ENCODE measurements at regions of chr14 and their contacts with region 1.

Region 1: GRCh38 chr14:90399541-90400444 is 3.0 kb downstream of the CALM1 start:
- DNase-seq: peak; percentile 73 to 95 (median 85)
- ATAC-seq: peak; percentile 47
- H3K4me3 ChIP-seq: peak overlapping the region; percentile 59 to 75
- H3K4me3 Mint-ChIP-seq: peak overlapping the region; percentile 99
- H3K27ac ChIP-seq: peak overlapping the region; percentile 89
- H3K27ac Mint-ChIP-seq: peak overlapping the region; percentile 99
- H3K4me1 ChIP-seq: peaks cover 56% of the 10 kb centered on the region
- H3K4me1 Mint-ChIP-seq: peaks cover 60% of the 10 kb centered on the region
- H3K27me3 ChIP-seq: no peaks in the 10 kb centered on the region
- H3K27me3 Mint-ChIP-seq: no peaks in the 10 kb centered on the region
- CTCF ChIP-seq: peak; percentile 100

Region 2: GRCh38 chr14:90256354-90257131 is 143.2 kb before region 1 on chr14 and contains the start of gene PSMC1:
- CTCF ChIA-PET with region 1: interaction called, 4 read pairs
- POLR2A ChIA-PET with region 1: no interaction called
- intact Hi-C with region 1: loop called (anchors 2 to 5 kb)
- DNase-seq: peak; percentile 78 to 92 (median 85)
- ATAC-seq: peak; percentile 94
- H3K4me3 ChIP-seq: peak within 1 kb of the TSS; percentile 79 to 95
- H3K4me3 Mint-ChIP-seq: peak within 1 kb of the TSS; percentile 99
- H3K27ac ChIP-seq: peak within 1 kb of the TSS; percentile 73 to 80
- H3K27ac Mint-ChIP-seq: peak within 1 kb of the TSS; percentile 97
- H3K4me1 ChIP-seq: peaks cover 17% of the 10 kb centered on the region
- H3K4me1 Mint-ChIP-seq: peaks cover 32% of the 10 kb centered on the region
- H3K27me3 ChIP-seq: no peaks in the 10 kb centered on the region
- H3K27me3 Mint-ChIP-seq: peaks cover 7% of the 10 kb centered on the region
- CTCF ChIP-seq: no peak
- total RNA-seq, gene PSMC1: 76.8 to 85.0 TPM

Region 3: DNA sequence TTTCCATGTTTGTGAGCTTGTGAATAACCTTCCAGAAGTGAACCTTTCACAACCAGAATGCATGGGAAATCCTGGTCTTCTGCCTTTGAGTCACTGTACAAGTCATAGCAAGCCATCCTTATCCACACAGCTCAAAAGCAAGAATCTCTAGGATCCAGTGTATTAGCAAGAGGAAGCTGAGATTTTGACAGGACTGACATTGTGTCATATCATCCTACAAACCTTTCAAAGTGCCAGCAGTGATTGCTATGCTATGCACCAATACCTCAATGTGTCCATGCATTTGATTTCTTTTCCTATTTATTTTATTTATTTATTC is 54.6 kb before region 1 on chr14:
- CTCF ChIA-PET with region 1: no interaction called
- POLR2A ChIA-PET with region 1: no interaction called
- intact Hi-C with region 1: no loop called
- DNase-seq: no peak
- ATAC-seq: no peak
- H3K4me3 ChIP-seq: no peak overlapping the region
- H3K4me3 Mint-ChIP-seq: no peak overlapping the region
- H3K27ac ChIP-seq: no peak overlapping the region
- H3K27ac Mint-ChIP-seq: no peak overlapping the region
- H3K4me1 ChIP-seq: no peaks in the 10 kb centered on the region
- H3K4me1 Mint-ChIP-seq: no peaks in the 10 kb centered on the region
- H3K27me3 ChIP-seq: no peaks in the 10 kb centered on the region
- H3K27me3 Mint-ChIP-seq: peaks cover 3% of the 10 kb centered on the region
- CTCF ChIP-seq: no peak

Region 4: DNA sequence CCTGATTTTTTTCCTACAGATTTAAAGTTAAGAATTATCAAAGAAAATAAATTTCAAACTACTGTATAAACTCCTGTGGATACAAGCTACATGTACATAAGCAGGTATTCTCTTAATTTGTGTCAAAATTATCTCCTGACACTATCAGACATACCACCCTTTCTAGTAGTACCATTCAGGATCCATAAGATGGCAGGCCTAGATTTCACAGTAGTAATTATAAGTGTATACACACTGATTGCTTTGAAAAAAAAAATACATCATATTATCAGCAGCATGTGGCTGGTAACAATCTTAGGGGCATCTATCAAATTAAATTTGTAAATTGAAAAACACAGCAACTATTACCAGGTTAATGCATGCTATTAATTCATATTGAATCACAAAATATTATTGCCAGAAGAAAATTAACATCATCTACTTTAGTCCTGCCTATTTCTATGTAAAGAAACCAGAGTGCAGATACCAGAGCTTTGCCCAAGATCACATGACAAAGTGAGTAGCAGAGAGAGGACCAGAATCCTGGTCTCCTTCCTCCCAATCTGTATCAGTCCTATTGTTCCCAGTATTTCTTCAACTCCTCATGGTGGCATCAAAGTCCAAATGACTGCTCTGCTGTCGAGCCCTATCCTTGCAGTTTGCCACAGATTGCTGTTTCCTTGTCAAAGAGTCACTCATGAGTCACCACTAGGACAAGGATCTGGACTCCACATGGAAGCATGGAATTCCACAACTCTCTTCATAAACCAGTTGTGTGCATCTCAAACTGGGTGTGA is 30.7 kb before region 1 on chr14:
- CTCF ChIA-PET with region 1: interaction called, 20 read pairs
- POLR2A ChIA-PET with region 1: interaction called, 5 read pairs
- intact Hi-C with region 1: loop called (anchors 1 kb)
- DNase-seq: peak in 2 of 9 experiments; percentile 57 to 71
- ATAC-seq: peak; percentile 98
- H3K4me3 ChIP-seq: no peak overlapping the region
- H3K4me3 Mint-ChIP-seq: no peak overlapping the region
- H3K27ac ChIP-seq: no peak overlapping the region
- H3K27ac Mint-ChIP-seq: no peak overlapping the region
- H3K4me1 ChIP-seq: no peaks in the 10 kb centered on the region
- H3K4me1 Mint-ChIP-seq: no peaks in the 10 kb centered on the region
- H3K27me3 ChIP-seq: peaks cover 0 to 3% of the 10 kb centered on the region in 2 experiments
- H3K27me3 Mint-ChIP-seq: no peaks in the 10 kb centered on the region
- CTCF ChIP-seq: peak; percentile 80

Region 5: GRCh38 chr14:90518941-90519256 is 119.1 kb after region 1 on chr14:
- CTCF ChIA-PET with region 1: interaction called, 3 read pairs
- POLR2A ChIA-PET with region 1: no interaction called
- intact Hi-C with region 1: loop called (anchors 1 kb)
- DNase-seq: peak in 8 of 9 experiments; percentile 29 to 69 (median 58)
- ATAC-seq: peak; percentile 62
- H3K4me3 ChIP-seq: no peak overlapping the region
- H3K4me3 Mint-ChIP-seq: no peak overlapping the region
- H3K27ac ChIP-seq: no peak overlapping the region
- H3K27ac Mint-ChIP-seq: no peak overlapping the region
- H3K4me1 ChIP-seq: no peaks in the 10 kb centered on the region
- H3K4me1 Mint-ChIP-seq: no peaks in the 10 kb centered on the region
- H3K27me3 ChIP-seq: no peaks in the 10 kb centered on the region
- H3K27me3 Mint-ChIP-seq: peaks cover 2% of the 10 kb centered on the region
- CTCF ChIP-seq: peak; percentile 51

Region 6: DNA sequence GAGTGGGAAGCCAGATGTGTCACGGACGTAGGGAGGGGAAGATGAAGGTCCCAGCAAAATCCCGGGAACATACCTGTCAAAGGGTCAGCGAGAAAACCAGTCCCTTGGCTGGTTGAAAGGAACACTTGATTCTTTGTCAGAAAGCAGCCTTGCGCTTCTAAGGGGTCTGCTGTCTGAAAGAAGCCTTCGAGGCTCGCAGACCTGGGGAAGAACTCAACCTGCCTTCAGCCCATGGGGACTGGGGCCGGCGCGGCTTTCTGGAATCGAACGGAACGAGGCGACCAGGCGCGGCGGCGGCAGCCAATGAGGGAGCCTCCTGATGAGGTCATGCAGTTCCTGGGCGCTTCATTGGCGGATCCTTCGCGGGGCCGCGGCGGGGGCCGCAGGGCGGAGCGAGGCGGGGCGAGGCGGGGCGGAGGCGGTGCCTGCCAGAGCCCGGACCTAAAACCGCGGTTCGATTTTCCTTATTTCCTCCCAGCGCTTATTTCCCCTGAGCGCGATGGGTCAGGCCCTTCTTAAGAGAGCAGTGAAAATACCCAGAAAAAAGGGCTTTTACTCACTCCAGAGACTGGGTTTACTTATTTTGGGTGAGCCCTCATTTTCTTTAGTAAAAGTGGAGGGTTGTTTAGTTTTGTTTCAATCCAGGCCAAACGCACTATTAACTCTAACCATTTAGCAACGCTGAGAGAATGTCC is 428.3 kb after region 1 on chr14:
- CTCF ChIA-PET with region 1: no interaction called
- POLR2A ChIA-PET with region 1: no interaction called
- intact Hi-C with region 1: loop called in 1 of 2 experiments (anchors 10 kb)
- DNase-seq: peak; percentile 80 to 93 (median 89)
- ATAC-seq: peak; percentile 99
- H3K4me3 ChIP-seq: peak overlapping the region; percentile 60 to 66
- H3K4me3 Mint-ChIP-seq: peak overlapping the region; percentile 79
- H3K27ac ChIP-seq: peak overlapping the region; percentile 34 to 90
- H3K27ac Mint-ChIP-seq: peak overlapping the region; percentile 77
- H3K4me1 ChIP-seq: peaks cover 15% of the 10 kb centered on the region
- H3K4me1 Mint-ChIP-seq: peaks cover 14% of the 10 kb centered on the region
- H3K27me3 ChIP-seq: no peaks in the 10 kb centered on the region
- H3K27me3 Mint-ChIP-seq: no peaks in the 10 kb centered on the region
- CTCF ChIP-seq: no peak